Activated CD4-positive, alpha-beta T cell treated with anti-CD3 and anti-CD28 coated beads, Interleukin-2, amount 10 ng/mL, durations not matched to agents 24 days and 14 days (primary cell): ENCODE measurements at regions of chr5 and their contacts with region 1.

Region 1: GRCh38 chr5:58886315-58887207 is 303.7 kb downstream of the RAB3C start:
- DNase-seq: peak; percentile 90
- H3K4me3 Mint-ChIP-seq: peak overlapping the region; percentile 9
- H3K27ac Mint-ChIP-seq: peak overlapping the region; percentile 65
- H3K4me1 Mint-ChIP-seq: peaks cover 30% of the 10 kb centered on the region
- H3K27me3 Mint-ChIP-seq: peaks cover 13% of the 10 kb centered on the region

Region 2: DNA sequence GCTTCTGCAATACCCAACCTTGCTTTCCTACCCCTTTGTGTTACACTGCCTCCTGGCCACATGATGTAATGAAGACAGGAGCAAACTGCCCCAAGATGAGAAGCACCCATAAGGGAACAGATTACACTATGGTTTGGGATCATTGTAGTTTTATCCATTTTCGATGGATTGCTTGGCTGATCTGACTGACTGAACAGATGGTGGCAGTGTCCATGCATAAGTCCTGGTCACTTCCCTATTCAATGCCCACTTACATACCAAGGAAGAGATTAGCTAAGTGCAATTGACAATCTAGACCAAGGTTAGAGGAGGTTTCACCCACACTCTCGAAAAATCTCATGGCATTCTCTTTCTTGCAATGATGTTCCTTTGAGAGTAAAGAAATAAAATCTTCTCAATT is 16.2 kb after region 1 on chr5:
- intact Hi-C with region 1: no loop called
- DNase-seq: no peak
- H3K4me3 Mint-ChIP-seq: no peak overlapping the region
- H3K27ac Mint-ChIP-seq: no peak overlapping the region
- H3K4me1 Mint-ChIP-seq: no peaks in the 10 kb centered on the region
- H3K27me3 Mint-ChIP-seq: peaks cover 6% of the 10 kb centered on the region

Region 3: GRCh38 chr5:58965677-58966414 is 79.3 kb after region 1 on chr5:
- intact Hi-C with region 1: loop called (anchors 5 kb)
- DNase-seq: no peak
- H3K4me3 Mint-ChIP-seq: no peak overlapping the region
- H3K27ac Mint-ChIP-seq: no peak overlapping the region
- H3K4me1 Mint-ChIP-seq: peaks cover 2% of the 10 kb centered on the region
- H3K27me3 Mint-ChIP-seq: no peaks in the 10 kb centered on the region

Region 4: GRCh38 chr5:59039296-59040023 is 152.9 kb after region 1 on chr5:
- intact Hi-C with region 1: loop called (anchors 2 kb)
- DNase-seq: peak; percentile 97
- H3K4me3 Mint-ChIP-seq: peak overlapping the region; percentile 92
- H3K27ac Mint-ChIP-seq: peak overlapping the region; percentile 99
- H3K4me1 Mint-ChIP-seq: peaks cover 48% of the 10 kb centered on the region
- H3K27me3 Mint-ChIP-seq: no peaks in the 10 kb centered on the region

Region 5: DNA sequence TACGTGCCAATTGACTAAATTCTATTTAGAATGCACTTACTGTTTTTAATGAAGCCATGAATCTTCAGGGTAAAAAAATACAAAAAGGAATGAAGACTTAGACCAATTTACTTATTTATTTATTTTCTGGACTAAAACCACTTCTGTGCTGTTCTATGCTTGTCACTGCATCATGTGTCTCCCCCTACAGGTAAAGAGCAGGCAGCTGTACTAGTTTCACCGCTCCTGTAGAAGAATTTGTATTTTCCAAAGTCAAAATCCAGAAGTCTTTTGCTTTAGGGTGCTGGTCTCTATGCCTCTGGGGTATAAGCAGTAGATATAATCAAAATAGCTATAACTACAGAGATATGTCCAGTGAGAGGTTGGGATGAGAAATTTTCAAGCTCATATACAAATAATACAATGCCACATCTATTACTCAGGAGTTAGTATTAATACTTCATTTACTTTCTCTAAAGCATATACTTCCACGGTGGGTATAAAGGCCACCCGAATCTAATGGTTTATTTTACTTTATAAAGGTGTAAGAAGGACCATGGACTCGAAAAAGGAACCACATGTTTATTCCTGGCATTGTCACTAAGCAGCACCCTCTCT is 287.8 kb after region 1 on chr5:
- intact Hi-C with region 1: loop called (anchors 1 kb)
- DNase-seq: peak; percentile 81
- H3K4me3 Mint-ChIP-seq: peak overlapping the region; percentile 19
- H3K27ac Mint-ChIP-seq: no peak overlapping the region
- H3K4me1 Mint-ChIP-seq: peaks cover 33% of the 10 kb centered on the region
- H3K27me3 Mint-ChIP-seq: no peaks in the 10 kb centered on the region

Region 6: GRCh38 chr5:59367791-59368394 is 481.3 kb after region 1 on chr5:
- intact Hi-C with region 1: loop called (anchors 5 kb)
- DNase-seq: peak; percentile 84
- H3K4me3 Mint-ChIP-seq: no peak overlapping the region
- H3K27ac Mint-ChIP-seq: no peak overlapping the region
- H3K4me1 Mint-ChIP-seq: no peaks in the 10 kb centered on the region
- H3K27me3 Mint-ChIP-seq: peaks cover 44% of the 10 kb centered on the region

Region 7: DNA sequence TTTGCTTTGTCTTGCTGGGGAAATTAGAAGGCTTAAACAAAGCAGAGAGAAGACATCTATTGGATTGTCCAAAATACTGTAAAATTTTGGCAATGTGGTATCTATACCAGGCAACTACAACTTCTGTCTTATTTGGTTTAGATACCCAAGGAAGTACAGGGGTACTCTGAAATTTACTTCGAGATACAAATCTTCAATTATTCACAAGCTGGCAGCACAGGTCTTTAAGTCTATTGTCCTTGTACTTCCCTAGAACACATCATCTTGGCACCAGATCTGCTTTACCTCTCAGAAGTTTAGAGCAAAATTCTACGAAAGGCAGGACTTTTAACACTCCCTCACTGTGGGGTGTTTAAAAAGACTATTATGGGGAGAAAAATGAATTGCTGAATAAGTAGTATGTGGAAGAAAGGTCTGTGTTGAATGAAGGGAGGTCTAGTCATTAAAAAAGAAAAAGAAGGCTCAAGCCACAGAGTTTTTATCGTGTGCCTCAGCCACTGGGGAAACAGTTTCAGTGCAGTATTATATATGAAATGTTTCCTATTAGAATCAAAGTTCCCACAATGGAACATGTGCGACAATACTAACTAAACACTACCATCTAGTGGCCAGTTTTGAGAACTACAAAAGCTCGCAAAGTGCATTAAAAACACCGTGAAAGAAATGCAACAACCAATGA is 913.2 kb after region 1 on chr5:
- intact Hi-C with region 1: loop called (anchors 10 kb)
- DNase-seq: peak; percentile 80
- H3K4me3 Mint-ChIP-seq: no peak overlapping the region
- H3K27ac Mint-ChIP-seq: no peak overlapping the region
- H3K4me1 Mint-ChIP-seq: no peaks in the 10 kb centered on the region
- H3K27me3 Mint-ChIP-seq: peaks cover 12% of the 10 kb centered on the region